Endothelial cell of umbilical vein (primary cell): ENCODE measurements at regions of chr13 and their contacts with region 1.

Region 1: GRCh38 chr13:109145631-109146030 is 516.2 kb downstream of the MYO16 start:
- DNase-seq: peak; percentile 71
- H3K4me3 ChIP-seq: no peak overlapping the region
- H3K27ac ChIP-seq: peak overlapping the region; percentile 57
- H3K4me1 ChIP-seq: peaks cover 13% of the 10 kb centered on the region
- H3K27me3 ChIP-seq: peaks cover 10 to 19% of the 10 kb centered on the region in 2 experiments
- CTCF ChIP-seq: peak; percentile 73 to 79
- POLR2A ChIP-seq: no peak

Region 2: DNA sequence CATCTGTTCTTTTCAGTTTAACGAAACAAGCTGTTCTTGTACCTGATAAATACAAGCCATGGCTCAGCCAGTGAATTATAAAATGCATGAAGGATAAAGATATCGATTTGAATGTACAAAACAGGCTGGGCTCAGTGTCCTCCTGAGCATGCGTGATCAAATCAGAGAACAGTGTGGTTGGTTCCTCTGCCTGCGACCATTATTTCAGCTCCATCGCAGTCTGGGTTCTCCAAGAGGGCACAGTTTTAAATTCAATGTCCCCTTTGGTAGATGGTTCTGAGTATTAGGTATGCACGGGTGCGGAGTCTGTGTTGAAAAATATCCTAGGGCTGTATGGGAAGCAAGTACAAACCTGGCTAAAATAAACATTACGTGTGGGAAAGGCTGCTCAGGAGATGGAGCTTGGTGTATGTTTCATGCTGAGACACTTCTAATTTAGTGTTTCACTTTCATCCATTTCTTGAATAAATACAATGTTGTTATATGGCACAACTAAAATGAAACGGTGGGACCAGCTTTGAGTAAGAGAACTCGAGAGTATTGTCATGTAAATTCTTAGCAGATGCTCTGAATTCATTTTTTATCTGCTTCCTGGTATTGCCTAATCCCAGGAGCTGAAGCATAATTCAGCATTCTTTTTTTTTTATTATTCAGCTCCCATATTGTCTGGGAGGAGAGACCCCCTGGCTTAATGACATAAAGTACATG is 57.6 kb before region 1 on chr13:
- CTCF ChIA-PET with region 1: no interaction called
- POLR2A ChIA-PET with region 1: no interaction called
- dilution Hi-C with region 1: no loop called
- intact Hi-C with region 1: no loop called
- DNase-seq: no peak
- H3K4me3 ChIP-seq: no peak overlapping the region
- H3K27ac ChIP-seq: no peak overlapping the region
- H3K4me1 ChIP-seq: no peaks in the 10 kb centered on the region
- H3K27me3 ChIP-seq: no peaks in the 10 kb centered on the region
- CTCF ChIP-seq: no peak
- POLR2A ChIP-seq: no peak

Region 3: DNA sequence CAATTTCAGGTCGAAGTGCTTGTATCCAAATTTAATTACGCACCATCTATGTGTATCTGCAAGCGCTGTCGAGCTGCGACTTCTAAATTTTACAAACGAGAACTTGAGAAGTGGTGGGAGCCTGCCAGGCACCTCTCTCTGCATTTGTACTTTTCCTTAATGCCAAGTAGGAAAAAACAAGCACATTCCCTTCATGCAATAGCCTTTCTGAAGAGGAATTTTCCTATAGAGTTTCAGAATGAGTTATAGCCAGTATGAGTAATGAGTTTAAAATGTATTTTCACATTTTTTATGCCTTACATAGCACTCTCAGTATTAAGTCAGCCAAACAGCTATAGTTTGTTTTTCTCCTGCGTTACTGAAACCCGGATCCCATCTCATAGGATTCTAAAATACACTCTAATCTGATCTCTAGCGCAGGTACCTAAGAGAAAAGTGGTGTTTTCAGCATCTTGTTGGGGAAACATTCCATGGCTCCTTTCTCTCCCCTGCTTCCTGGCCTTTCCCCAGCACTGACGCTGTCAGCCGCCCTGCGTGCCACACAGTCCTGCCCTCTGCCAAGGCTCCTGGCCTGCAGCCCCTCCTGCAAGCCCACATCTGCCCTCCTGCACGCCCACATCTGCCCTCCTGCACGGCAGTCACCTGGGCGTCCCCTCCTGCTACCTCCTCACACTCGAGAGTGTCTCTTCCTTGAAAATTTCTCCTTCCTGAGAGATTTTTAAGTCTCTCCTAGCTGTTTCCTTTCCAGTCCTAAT is 10.7 kb after region 1 on chr13:
- CTCF ChIA-PET with region 1: interaction called, 10 read pairs
- POLR2A ChIA-PET with region 1: no interaction called
- dilution Hi-C with region 1: no loop called
- intact Hi-C with region 1: no loop called
- DNase-seq: peak; percentile 91
- H3K4me3 ChIP-seq: no peak overlapping the region
- H3K27ac ChIP-seq: peak overlapping the region; percentile 87
- H3K4me1 ChIP-seq: peaks cover 39% of the 10 kb centered on the region
- H3K27me3 ChIP-seq: no peaks in the 10 kb centered on the region
- CTCF ChIP-seq: no peak
- POLR2A ChIP-seq: no peak

Region 4: GRCh38 chr13:109275852-109276251 is 130.2 kb after region 1 on chr13:
- CTCF ChIA-PET with region 1: interaction called, 5 read pairs
- POLR2A ChIA-PET with region 1: no interaction called
- dilution Hi-C with region 1: no loop called
- intact Hi-C with region 1: loop called (anchors 1 kb)
- DNase-seq: no peak
- H3K4me3 ChIP-seq: no peak overlapping the region
- H3K27ac ChIP-seq: no peak overlapping the region
- H3K4me1 ChIP-seq: peaks cover 27% of the 10 kb centered on the region
- H3K27me3 ChIP-seq: no peaks in the 10 kb centered on the region
- CTCF ChIP-seq: no peak
- POLR2A ChIP-seq: no peak

Region 5: GRCh38 chr13:109479991-109480691 is 334.5 kb after region 1 on chr13:
- CTCF ChIA-PET with region 1: interaction called, 3 read pairs
- POLR2A ChIA-PET with region 1: no interaction called
- dilution Hi-C with region 1: no loop called
- intact Hi-C with region 1: loop called (anchors 10 kb)
- DNase-seq: no peak
- H3K4me3 ChIP-seq: no peak overlapping the region
- H3K27ac ChIP-seq: no peak overlapping the region
- H3K4me1 ChIP-seq: no peaks in the 10 kb centered on the region
- H3K27me3 ChIP-seq: no peaks in the 10 kb centered on the region
- CTCF ChIP-seq: no peak
- POLR2A ChIP-seq: no peak

Region 6: GRCh38 chr13:109743706-109744453 is 598.2 kb after region 1 on chr13:
- CTCF ChIA-PET with region 1: interaction called, 16 read pairs
- POLR2A ChIA-PET with region 1: no interaction called
- dilution Hi-C with region 1: no loop called
- intact Hi-C with region 1: loop called (anchors 2 kb)
- DNase-seq: peak; percentile 69
- H3K4me3 ChIP-seq: no peak overlapping the region
- H3K27ac ChIP-seq: no peak overlapping the region
- H3K4me1 ChIP-seq: no peaks in the 10 kb centered on the region
- H3K27me3 ChIP-seq: no peaks in the 10 kb centered on the region
- CTCF ChIP-seq: no peak
- POLR2A ChIP-seq: no peak

Region 7: DNA sequence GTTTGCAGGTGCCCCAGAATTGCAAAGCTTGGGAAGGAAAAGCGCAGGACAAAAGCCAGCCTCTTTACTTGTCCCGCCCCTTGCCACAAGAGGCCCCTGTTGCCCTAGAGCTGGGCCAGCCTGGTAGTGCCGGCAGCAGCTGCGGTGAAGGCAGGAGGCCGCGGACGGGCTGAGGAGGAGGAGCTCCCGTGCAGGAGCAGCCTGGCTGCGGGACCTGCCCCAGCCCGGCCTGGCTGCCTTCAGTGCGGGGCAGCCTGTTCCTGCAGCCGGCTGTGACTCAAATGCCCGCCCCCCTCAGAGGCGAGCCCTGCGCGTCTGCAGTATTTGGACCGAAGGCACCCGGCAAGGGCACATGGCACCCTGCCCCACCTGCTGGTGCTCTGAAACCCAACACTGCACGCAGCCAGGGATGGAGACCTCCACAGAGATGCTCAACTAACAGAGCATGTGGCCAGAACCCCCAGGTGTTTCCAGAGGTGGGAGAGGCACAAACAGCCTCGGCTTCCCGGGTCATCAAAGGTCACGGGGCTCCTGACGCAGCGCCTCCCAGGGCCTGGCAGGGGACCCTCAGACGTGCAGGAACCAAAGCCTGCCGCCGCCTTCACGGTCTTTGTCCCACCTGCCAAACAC is 1499.4 kb after region 1 on chr13:
- CTCF ChIA-PET with region 1: no interaction called
- POLR2A ChIA-PET with region 1: no interaction called
- dilution Hi-C with region 1: no loop called
- intact Hi-C with region 1: no loop called
- DNase-seq: peak; percentile 50
- H3K4me3 ChIP-seq: no peak overlapping the region
- H3K27ac ChIP-seq: no peak overlapping the region
- H3K4me1 ChIP-seq: no peaks in the 10 kb centered on the region
- H3K27me3 ChIP-seq: no peaks in the 10 kb centered on the region
- CTCF ChIP-seq: peak; percentile 26 to 57
- POLR2A ChIP-seq: no peak